GM12878 (cell line): ENCODE measurements at regions of chr1 and their contacts with region 1.

Region 1: DNA sequence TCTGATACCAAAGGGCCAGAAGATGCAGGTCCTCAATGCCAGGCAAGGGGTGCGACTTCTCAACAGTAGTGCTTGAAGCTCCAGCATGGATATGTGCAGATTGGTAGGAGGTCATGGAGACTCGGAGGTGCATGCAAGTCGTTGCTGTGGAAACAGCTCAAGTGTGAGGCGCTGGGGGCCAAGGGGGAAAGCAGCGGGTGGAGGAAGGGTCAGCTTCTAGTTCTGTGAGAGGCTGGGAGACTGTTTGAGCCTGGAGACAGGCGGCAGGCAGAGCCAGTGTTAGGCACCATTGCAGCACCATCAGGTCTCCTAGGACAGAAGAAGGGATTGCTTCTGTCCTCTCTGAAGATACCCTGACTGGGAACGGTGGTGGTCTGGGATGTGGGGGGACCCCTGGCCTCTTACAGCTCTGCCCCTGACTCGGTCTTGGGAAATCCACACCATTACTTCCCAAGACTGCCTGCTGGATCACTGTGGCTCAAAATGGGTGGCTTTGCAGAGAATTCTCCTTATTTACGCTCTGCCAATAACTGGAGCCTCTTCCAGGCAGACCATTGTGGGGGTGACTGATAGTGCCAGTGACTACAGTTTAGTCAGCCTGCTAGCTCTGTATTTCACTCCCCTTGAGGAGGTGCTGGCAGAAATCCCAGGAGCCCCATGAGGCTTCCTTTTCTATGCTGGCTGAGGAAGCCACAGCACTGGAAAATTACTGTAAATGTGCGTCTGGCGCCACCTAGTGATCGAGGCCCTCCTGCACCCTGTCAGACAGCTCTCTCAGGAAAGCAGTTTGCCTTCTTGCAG is 46.3 kb upstream of the VANGL1 start:
- DNase-seq: peak; percentile 16
- ATAC-seq: peak; percentile 94
- H3K4me3 ChIP-seq: no peak overlapping the region
- H3K27ac ChIP-seq: no peak overlapping the region
- H3K4me1 ChIP-seq: no peaks in the 10 kb centered on the region
- H3K27me3 ChIP-seq: no peaks in the 10 kb centered on the region
- CTCF ChIP-seq: peak; percentile 88 to 92 (median 89)
- EP300 ChIP-seq: no peak
- POLR2A ChIP-seq: no peak
- RAD21 ChIP-seq: peak; percentile 80

Region 2: GRCh38 chr1:114979278-114979891 is 616.1 kb before region 1 on chr1:
- CTCF ChIA-PET with region 1: interaction called, 7 read pairs
- POLR2A ChIA-PET with region 1: no interaction called
- RAD21 ChIA-PET with region 1: no interaction called
- SMC1A ChIA-PET with region 1: no interaction called
- in situ Hi-C with region 1: no loop called
- intact Hi-C with region 1: loop called (anchors 10 kb)
- DNase-seq: peak; percentile 13
- ATAC-seq: peak; percentile 72
- H3K4me3 ChIP-seq: no peak overlapping the region
- H3K27ac ChIP-seq: no peak overlapping the region
- H3K4me1 ChIP-seq: no peaks in the 10 kb centered on the region
- H3K27me3 ChIP-seq: no peaks in the 10 kb centered on the region
- CTCF ChIP-seq: peak; percentile 60 to 70 (median 65); a peak in 5 of 6 replicates
- EP300 ChIP-seq: no peak
- POLR2A ChIP-seq: no peak
- RAD21 ChIP-seq: peak; percentile 73

Region 3: DNA sequence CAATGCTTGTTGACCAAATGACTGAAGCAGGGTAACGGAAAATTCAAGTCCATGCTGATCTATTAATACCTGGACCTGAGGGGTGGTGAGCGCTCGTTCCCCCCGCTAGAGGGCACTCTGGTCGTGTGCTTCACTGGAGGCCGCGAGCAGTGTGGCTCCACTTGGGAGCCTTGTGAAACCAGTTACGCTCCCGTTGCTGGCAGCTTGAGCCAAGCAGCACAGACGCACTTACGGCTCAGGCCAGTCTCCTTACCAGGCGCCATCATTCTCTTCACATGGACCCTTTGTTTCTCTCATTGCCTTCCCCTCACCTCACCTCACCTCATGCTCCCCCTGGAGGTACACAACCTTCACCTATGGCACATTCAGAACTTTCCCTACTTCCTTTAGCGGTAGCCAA is 456.5 kb before region 1 on chr1:
- CTCF ChIA-PET with region 1: interaction called, 105 read pairs
- POLR2A ChIA-PET with region 1: no interaction called
- RAD21 ChIA-PET with region 1: interaction called, 45 read pairs
- SMC1A ChIA-PET with region 1: interaction called, 14 read pairs
- in situ Hi-C with region 1: loop called (anchors 5 kb)
- intact Hi-C with region 1: loop called (anchors 1 kb)
- DNase-seq: peak; percentile 9
- ATAC-seq: peak; percentile 100
- H3K4me3 ChIP-seq: no peak overlapping the region
- H3K27ac ChIP-seq: no peak overlapping the region
- H3K4me1 ChIP-seq: no peaks in the 10 kb centered on the region
- H3K27me3 ChIP-seq: no peaks in the 10 kb centered on the region; a peak in 1 of 4 replicates
- CTCF ChIP-seq: peak; percentile 85 to 88 (median 86); a peak in 5 of 6 replicates
- EP300 ChIP-seq: no peak
- POLR2A ChIP-seq: no peak
- RAD21 ChIP-seq: peak; percentile 77

Region 4: GRCh38 chr1:115275212-115275611 is 320.3 kb before region 1 on chr1:
- CTCF ChIA-PET with region 1: interaction called, 6 read pairs
- POLR2A ChIA-PET with region 1: no interaction called
- RAD21 ChIA-PET with region 1: no interaction called
- SMC1A ChIA-PET with region 1: no interaction called
- in situ Hi-C with region 1: no loop called
- intact Hi-C with region 1: loop called (anchors 1 kb)
- DNase-seq: no peak
- ATAC-seq: 0 out of 3 replicates have a peak, but pooled peaks have one; percentile 36
- H3K4me3 ChIP-seq: no peak overlapping the region
- H3K27ac ChIP-seq: no peak overlapping the region
- H3K4me1 ChIP-seq: no peaks in the 10 kb centered on the region
- H3K27me3 ChIP-seq: 0 out of 4 replicates have a peak, but pooled peaks cover 0 to 2% of the 10 kb centered on the region in 2 experiments
- CTCF ChIP-seq: peak; percentile 39 to 68 (median 60); a peak in 5 of 6 replicates
- EP300 ChIP-seq: no peak
- POLR2A ChIP-seq: no peak
- RAD21 ChIP-seq: peak; percentile 45

Region 5: GRCh38 chr1:115469703-115470476 is 125.6 kb before region 1 on chr1:
- CTCF ChIA-PET with region 1: interaction called, 3 read pairs
- POLR2A ChIA-PET with region 1: no interaction called
- RAD21 ChIA-PET with region 1: no interaction called
- SMC1A ChIA-PET with region 1: no interaction called
- in situ Hi-C with region 1: no loop called
- intact Hi-C with region 1: loop called (anchors 10 kb)
- DNase-seq: no peak
- ATAC-seq: peak; percentile 88
- H3K4me3 ChIP-seq: no peak overlapping the region
- H3K27ac ChIP-seq: no peak overlapping the region
- H3K4me1 ChIP-seq: no peaks in the 10 kb centered on the region
- H3K27me3 ChIP-seq: no peaks in the 10 kb centered on the region
- CTCF ChIP-seq: peak; percentile 81 to 91 (median 90)
- EP300 ChIP-seq: no peak
- POLR2A ChIP-seq: no peak
- RAD21 ChIP-seq: peak; percentile 75

Region 6: GRCh38 chr1:115545791-115546733 is 49.4 kb before region 1 on chr1:
- CTCF ChIA-PET with region 1: interaction called, 5 read pairs
- POLR2A ChIA-PET with region 1: interaction called, 4 read pairs
- RAD21 ChIA-PET with region 1: no interaction called
- SMC1A ChIA-PET with region 1: no interaction called
- in situ Hi-C with region 1: no loop called
- intact Hi-C with region 1: loop called (anchors 2 kb)
- DNase-seq: no peak
- ATAC-seq: peak; percentile 78
- H3K4me3 ChIP-seq: no peak overlapping the region
- H3K27ac ChIP-seq: no peak overlapping the region
- H3K4me1 ChIP-seq: no peaks in the 10 kb centered on the region
- H3K27me3 ChIP-seq: peaks cover 0 to 4% of the 10 kb centered on the region in 2 experiments; a peak in 2 of 4 replicates
- CTCF ChIP-seq: peak; percentile 36 to 55 (median 45); a peak in 5 of 6 replicates
- EP300 ChIP-seq: no peak
- POLR2A ChIP-seq: no peak
- RAD21 ChIP-seq: 0 out of 2 replicates have a peak, but pooled peaks have one; percentile 29